ENCODE measurements at regions of chrX and their contacts with region 1.

Region 1: DNA sequence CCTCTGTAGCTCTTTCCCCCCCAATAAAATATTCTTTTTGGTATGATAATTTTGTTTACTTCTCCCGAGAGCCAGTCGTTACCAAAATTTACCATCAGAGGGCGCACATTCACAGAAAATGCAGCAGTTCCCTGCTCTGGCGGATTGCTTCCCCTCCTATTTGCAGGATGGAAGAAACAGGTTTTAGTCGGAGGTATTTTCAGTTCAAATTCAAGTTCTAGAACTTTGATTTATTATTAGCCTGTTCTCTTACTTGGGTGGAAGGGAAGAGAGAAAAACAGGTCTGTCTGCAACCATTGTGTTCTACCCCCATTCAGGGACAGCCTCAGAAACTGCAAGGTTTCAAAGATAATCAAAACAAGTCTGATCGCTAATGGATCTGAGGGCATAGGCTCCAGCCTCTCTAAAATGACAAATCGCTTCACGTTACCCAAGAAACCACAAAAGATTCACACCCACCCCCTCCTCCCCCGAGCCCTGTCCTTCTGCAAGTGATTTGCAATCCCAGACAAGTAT is 263.8 kb upstream of the RPS6KA3 start:
- DNase-seq: peak; percentile 69
- ATAC-seq: no peak
- H3K4me3 Mint-ChIP-seq: no peak overlapping the region
- H3K27ac Mint-ChIP-seq: no peak overlapping the region
- H3K4me1 Mint-ChIP-seq: peaks cover 6% of the 10 kb centered on the region
- H3K27me3 Mint-ChIP-seq: peaks cover 25% of the 10 kb centered on the region
- CTCF ChIP-seq: peak; percentile 59

Region 2: DNA sequence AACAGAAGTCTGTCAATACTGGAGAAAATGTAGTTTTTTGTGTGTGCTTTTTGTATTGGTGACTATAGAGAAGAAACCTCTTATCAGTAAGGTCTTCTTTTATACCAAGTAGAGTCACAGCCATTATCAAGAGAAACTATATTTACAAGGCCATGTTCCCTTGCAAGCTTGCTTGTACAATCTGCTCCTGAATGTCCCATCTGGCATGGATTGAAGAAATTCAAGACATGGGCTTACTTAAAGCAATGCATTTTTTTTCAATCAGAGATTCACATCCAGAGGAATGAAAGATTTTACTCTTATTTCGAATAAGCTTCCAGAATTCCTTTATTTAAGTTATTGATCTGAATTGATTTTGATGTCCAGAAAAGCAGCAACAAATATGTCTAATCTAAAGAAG is 273.5 kb after region 1 on chrX:
- CTCF ChIA-PET with region 1: no interaction called
- POLR2A ChIA-PET with region 1: no interaction called
- intact Hi-C with region 1: no loop called
- DNase-seq: no peak
- ATAC-seq: no peak
- H3K4me3 Mint-ChIP-seq: no peak overlapping the region
- H3K27ac Mint-ChIP-seq: no peak overlapping the region
- H3K4me1 Mint-ChIP-seq: no peaks in the 10 kb centered on the region
- H3K27me3 Mint-ChIP-seq: no peaks in the 10 kb centered on the region
- CTCF ChIP-seq: no peak

Region 3: GRCh38 chrX:21479695-21480270 is 949.3 kb after region 1 on chrX:
- CTCF ChIA-PET with region 1: interaction called, 15 read pairs
- POLR2A ChIA-PET with region 1: no interaction called
- intact Hi-C with region 1: loop called (anchors 5 kb)
- DNase-seq: peak; percentile 1
- ATAC-seq: peak; percentile 68
- H3K4me3 Mint-ChIP-seq: no peak overlapping the region
- H3K27ac Mint-ChIP-seq: no peak overlapping the region
- H3K4me1 Mint-ChIP-seq: no peaks in the 10 kb centered on the region
- H3K27me3 Mint-ChIP-seq: no peaks in the 10 kb centered on the region
- CTCF ChIP-seq: peak; percentile 30

Region 4: GRCh38 chrX:21725496-21725895 is 1195.0 kb after region 1 on chrX:
- CTCF ChIA-PET with region 1: interaction called, 12 read pairs
- POLR2A ChIA-PET with region 1: no interaction called
- intact Hi-C with region 1: no loop called
- DNase-seq: no peak
- ATAC-seq: no peak
- H3K4me3 Mint-ChIP-seq: no peak overlapping the region
- H3K27ac Mint-ChIP-seq: no peak overlapping the region
- H3K4me1 Mint-ChIP-seq: no peaks in the 10 kb centered on the region
- H3K27me3 Mint-ChIP-seq: peaks cover 4% of the 10 kb centered on the region
- CTCF ChIP-seq: no peak

Region 5: GRCh38 chrX:21745756-21746155 is 1215.3 kb after region 1 on chrX:
- CTCF ChIA-PET with region 1: interaction called, 4 read pairs
- POLR2A ChIA-PET with region 1: no interaction called
- intact Hi-C with region 1: loop called (anchors 10 kb)
- DNase-seq: peak; percentile 64
- ATAC-seq: no peak
- H3K4me3 Mint-ChIP-seq: no peak overlapping the region
- H3K27ac Mint-ChIP-seq: no peak overlapping the region
- H3K4me1 Mint-ChIP-seq: no peaks in the 10 kb centered on the region
- H3K27me3 Mint-ChIP-seq: peaks cover 2% of the 10 kb centered on the region
- CTCF ChIP-seq: peak; percentile 57

Measured in activated CD8-positive, alpha-beta T cell treated with anti-CD3 and anti-CD28 coated beads for 36 hours (primary cell).